Activated CD4-positive, alpha-beta T cell treated with anti-CD3 and anti-CD28 coated beads, Interleukin-2, amount 10 ng/mL, durations not matched to agents 24 days and 14 days (primary cell): ENCODE measurements at regions of chr20 and their contacts with region 1.

Region 1: GRCh38 chr20:43955062-43955749 is 40.6 kb downstream of the TOX2 start:
- DNase-seq: peak; percentile 80
- H3K4me3 Mint-ChIP-seq: peak overlapping the region; percentile 29
- H3K27ac Mint-ChIP-seq: peak overlapping the region; percentile 88
- H3K4me1 Mint-ChIP-seq: peaks cover 62% of the 10 kb centered on the region
- H3K27me3 Mint-ChIP-seq: peaks cover 15% of the 10 kb centered on the region

Region 2: GRCh38 chr20:43840382-43841070 is 114.7 kb before region 1 on chr20:
- intact Hi-C with region 1: loop called (anchors 2 kb)
- DNase-seq: peak; percentile 78
- H3K4me3 Mint-ChIP-seq: no peak overlapping the region
- H3K27ac Mint-ChIP-seq: peak overlapping the region; percentile 73
- H3K4me1 Mint-ChIP-seq: peaks cover 55% of the 10 kb centered on the region
- H3K27me3 Mint-ChIP-seq: peaks cover 4% of the 10 kb centered on the region

Region 3: GRCh38 chr20:43914311-43915210 is 40.6 kb before region 1 on chr20 and contains the start of gene TOX2:
- intact Hi-C with region 1: loop called (anchors 1 kb)
- DNase-seq: peak; percentile 87
- H3K4me3 Mint-ChIP-seq: peak within 1 kb of the TSS; percentile 85
- H3K27ac Mint-ChIP-seq: peak within 1 kb of the TSS; percentile 72
- H3K4me1 Mint-ChIP-seq: peaks cover 30% of the 10 kb centered on the region
- H3K27me3 Mint-ChIP-seq: peaks cover 51% of the 10 kb centered on the region
- total RNA-seq, gene TOX2: 1.4 and 2.6 TPM in 2 replicates

Region 4: DNA sequence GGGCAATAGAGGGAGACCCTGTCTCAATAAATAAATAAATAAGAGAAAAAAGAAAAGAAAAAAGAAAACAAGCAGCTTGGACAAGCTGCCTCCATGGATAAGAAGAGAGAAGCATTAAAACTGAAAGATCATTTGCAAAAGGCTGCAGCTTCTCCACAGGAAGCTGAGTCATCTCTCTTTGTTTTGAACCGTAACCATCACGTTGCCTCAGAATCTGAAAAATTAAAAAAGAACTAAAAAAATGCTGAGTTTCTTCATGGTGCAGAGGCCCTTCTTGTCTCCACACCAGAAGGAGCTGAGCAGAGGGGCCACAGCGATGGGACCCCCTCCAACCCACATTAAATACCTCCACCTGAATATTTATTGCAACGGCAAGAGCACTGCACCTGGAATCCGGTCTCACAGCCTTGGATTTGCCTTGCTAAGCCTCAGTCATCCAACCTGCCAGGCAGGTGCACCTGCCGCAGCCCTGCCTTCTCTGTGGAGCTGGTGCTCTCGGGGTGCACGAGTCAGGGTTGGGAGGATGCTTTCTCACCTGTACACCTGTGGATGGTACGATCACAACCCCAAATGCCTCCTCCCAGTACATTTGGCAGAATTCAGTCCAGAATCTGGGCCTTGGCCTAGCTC is 12.4 kb before region 1 on chr20:
- intact Hi-C with region 1: loop called (anchors 1 kb)
- DNase-seq: peak; percentile 82
- H3K4me3 Mint-ChIP-seq: peak overlapping the region; percentile 55
- H3K27ac Mint-ChIP-seq: peak overlapping the region; percentile 79
- H3K4me1 Mint-ChIP-seq: peaks cover 70% of the 10 kb centered on the region
- H3K27me3 Mint-ChIP-seq: peaks cover 21% of the 10 kb centered on the region